ENCODE measurements at regions of chr17 and their contacts with region 1.

Region 1: DNA sequence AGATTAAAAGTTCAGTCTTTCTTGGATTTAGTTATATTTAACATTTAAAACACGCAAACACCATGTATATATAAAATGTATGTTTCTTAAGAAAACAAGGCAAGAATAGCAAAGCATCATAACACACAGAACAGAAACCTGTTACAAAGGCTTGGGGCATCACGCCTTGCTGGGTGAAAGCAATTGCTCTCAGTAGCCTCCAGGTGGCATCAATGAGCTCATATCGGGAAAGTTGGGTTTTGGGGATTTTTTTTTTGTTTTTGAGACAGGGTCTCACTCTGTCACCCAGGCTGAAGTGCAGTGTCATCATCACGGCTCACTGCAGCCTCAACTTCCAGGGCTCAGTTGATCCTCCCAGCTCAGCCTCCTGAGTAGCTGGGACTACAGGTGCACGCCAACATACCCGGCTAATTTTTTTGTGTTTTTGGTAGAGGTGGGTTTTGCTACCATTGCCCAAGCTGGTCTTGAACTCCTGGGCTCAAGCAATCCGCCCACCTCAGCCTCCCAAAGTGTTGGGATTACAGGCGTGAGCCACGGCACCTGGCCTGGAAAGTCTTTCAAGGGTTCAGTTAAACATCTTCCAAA is 56.9 kb downstream of the CYB5D2 start:
- DNase-seq: peak; percentile 45
- H3K4me3 Mint-ChIP-seq: no peak overlapping the region
- H3K27ac Mint-ChIP-seq: no peak overlapping the region
- H3K4me1 Mint-ChIP-seq: peaks cover 13% of the 10 kb centered on the region
- H3K27me3 Mint-ChIP-seq: no peaks in the 10 kb centered on the region

Region 2: GRCh38 chr17:4161179-4161559 is 38.7 kb before region 1 on chr17:
- CTCF ChIA-PET with region 1: no interaction called
- POLR2A ChIA-PET with region 1: no interaction called
- intact Hi-C with region 1: no loop called
- DNase-seq: no peak
- H3K4me3 Mint-ChIP-seq: no peak overlapping the region
- H3K27ac Mint-ChIP-seq: peak overlapping the region; percentile 59
- H3K4me1 Mint-ChIP-seq: peaks cover 10% of the 10 kb centered on the region
- H3K27me3 Mint-ChIP-seq: no peaks in the 10 kb centered on the region

Region 3: DNA sequence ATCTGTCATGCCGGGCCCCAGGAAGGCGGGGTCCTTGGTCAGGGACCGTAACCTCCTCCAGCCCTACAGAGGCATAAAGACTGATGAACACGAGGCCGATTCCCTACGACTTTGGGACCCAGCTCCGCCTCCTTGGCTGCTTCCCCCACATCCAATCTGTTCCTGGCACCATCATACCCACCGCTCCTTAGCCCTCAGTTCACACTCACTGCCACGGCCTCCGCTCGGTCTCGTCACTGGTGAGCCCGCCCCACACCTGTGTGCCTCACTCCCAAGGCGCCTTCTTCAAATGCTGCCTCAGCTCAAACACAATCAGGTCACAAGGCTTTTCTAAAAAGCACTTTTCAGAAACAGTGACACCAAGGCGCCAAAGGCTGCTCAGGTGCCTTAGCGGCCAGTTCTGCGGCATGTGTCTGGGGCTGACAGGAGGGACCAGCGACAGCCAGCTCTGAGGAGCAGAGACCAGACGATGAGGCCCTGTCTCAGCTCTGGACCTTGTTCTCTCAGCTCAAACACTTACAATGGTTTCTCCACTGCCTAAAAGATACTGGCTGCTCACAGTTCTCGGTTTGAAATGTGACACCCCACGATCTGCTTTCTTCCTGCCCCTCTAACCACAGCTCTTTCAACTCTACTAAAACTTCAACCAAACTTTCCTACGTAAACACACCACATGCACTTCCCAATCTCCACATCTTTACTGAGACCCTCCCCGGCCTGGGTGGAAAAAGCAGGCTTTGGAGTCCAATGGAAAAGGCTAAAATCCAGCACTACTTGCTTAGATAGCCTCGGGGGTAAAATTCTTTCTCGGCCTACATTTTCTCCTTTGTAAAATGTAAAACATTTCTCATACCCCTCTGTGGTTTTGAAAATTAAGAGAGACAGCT is 23.7 kb before region 1 on chr17:
- CTCF ChIA-PET with region 1: interaction called, 19 read pairs
- POLR2A ChIA-PET with region 1: no interaction called
- intact Hi-C with region 1: no loop called
- DNase-seq: peak; percentile 62
- H3K4me3 Mint-ChIP-seq: peak overlapping the region; percentile 71
- H3K27ac Mint-ChIP-seq: peak overlapping the region; percentile 99
- H3K4me1 Mint-ChIP-seq: peaks cover 53% of the 10 kb centered on the region
- H3K27me3 Mint-ChIP-seq: no peaks in the 10 kb centered on the region

Region 4: GRCh38 chr17:4412933-4413831 is 213.3 kb after region 1 on chr17:
- CTCF ChIA-PET with region 1: interaction called, 21 read pairs
- POLR2A ChIA-PET with region 1: no interaction called
- intact Hi-C with region 1: loop called (anchors 5 kb)
- DNase-seq: peak; percentile 95
- H3K4me3 Mint-ChIP-seq: peak overlapping the region; percentile 68
- H3K27ac Mint-ChIP-seq: peak overlapping the region; percentile 38
- H3K4me1 Mint-ChIP-seq: peaks cover 6% of the 10 kb centered on the region
- H3K27me3 Mint-ChIP-seq: no peaks in the 10 kb centered on the region